Kidney (tissue), 22 donors: ENCODE measurements at regions of chr1 and their contacts with region 1.

Region 1: GRCh38 chr1:175118375-175119367 is 51.0 kb downstream of the TNN start:
- DNase-seq: no peak
- H3K4me3 ChIP-seq: no peak overlapping the region
- H3K27ac ChIP-seq: no peak overlapping the region
- H3K4me1 ChIP-seq: no peaks in the 10 kb centered on the region
- H3K27me3 ChIP-seq: no peaks in the 10 kb centered on the region
- CTCF ChIP-seq: no peak

Region 2: GRCh38 chr1:175043824-175044223 is 74.8 kb before region 1 on chr1:
- intact Hi-C with region 1: loop called (anchors 10 kb)
- DNase-seq: peak in 2 of 5 donors; percentile 31 to 53
- H3K4me3 ChIP-seq: no peak overlapping the region
- H3K27ac ChIP-seq: no peak overlapping the region
- H3K4me1 ChIP-seq: no peaks in the 10 kb centered on the region
- H3K27me3 ChIP-seq: no peaks in the 10 kb centered on the region
- CTCF ChIP-seq: no peak

Region 3: DNA sequence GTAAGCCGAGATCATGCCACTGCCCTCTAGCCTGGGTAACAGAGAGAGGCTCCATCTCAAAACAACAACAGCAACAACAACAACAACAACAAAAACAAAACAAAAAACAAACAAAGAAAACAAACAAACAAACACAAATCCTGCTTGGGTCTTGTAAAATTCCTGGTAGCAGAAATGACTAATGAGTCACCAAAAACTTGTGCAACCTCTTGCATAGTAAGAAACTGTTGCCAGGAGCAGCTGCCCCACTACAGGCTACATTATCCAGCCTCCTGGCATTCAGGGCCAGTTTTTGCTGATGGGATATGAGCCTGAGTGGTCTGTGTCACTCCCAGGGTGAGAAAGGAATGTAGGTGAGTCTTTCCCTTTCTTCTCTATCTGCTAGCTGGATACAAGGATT is 379.3 kb after region 1 on chr1:
- intact Hi-C with region 1: no loop called
- DNase-seq: no peak
- H3K4me3 ChIP-seq: no peak overlapping the region
- H3K27ac ChIP-seq: no peak overlapping the region
- H3K4me1 ChIP-seq: no peaks in the 10 kb centered on the region
- H3K27me3 ChIP-seq: no peaks in the 10 kb centered on the region
- CTCF ChIP-seq: no peak